PC-3 (cell line): ENCODE measurements at regions of chr5 and their contacts with region 1.

Region 1: GRCh38 chr5:137320056-137321045 is 178.8 kb downstream of the SPOCK1 start:
- DNase-seq: peak; percentile 69
- ATAC-seq: 0 out of 2 replicates have a peak, but pooled peaks have one; percentile 24
- H3K4me3 ChIP-seq: no peak overlapping the region
- H3K27ac ChIP-seq: no peak overlapping the region
- H3K4me1 ChIP-seq: peaks cover 8% of the 10 kb centered on the region
- H3K27me3 ChIP-seq: no peaks in the 10 kb centered on the region
- CTCF ChIP-seq: peak; percentile 71

Region 2: DNA sequence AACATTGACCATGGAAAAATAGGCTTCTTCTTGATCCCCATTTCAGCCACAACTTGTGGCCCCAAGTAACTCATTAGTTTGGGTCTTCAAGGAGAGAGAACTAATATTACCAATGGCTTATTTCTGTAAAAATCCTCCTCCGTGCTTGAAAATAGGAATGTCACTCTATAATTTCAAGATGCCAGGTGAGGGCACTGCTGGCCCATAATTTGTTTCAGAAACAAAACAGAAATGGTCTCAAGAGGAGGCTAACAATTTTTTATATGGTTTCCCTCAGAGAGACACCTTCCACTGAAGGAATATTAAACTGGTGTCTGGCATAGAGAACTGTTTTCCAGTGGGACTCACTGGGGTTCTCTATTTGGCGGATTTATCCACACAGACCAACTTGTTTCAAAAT is 518.0 kb before region 1 on chr5:
- CTCF ChIA-PET with region 1: interaction called, 10 read pairs
- POLR2A ChIA-PET with region 1: no interaction called
- intact Hi-C with region 1: loop called (anchors 5 kb)
- DNase-seq: peak; percentile 56
- ATAC-seq: no peak
- H3K4me3 ChIP-seq: no peak overlapping the region
- H3K27ac ChIP-seq: no peak overlapping the region
- H3K4me1 ChIP-seq: peaks cover 8% of the 10 kb centered on the region; the same call in 1 of the 2 replicates
- H3K27me3 ChIP-seq: no peaks in the 10 kb centered on the region
- CTCF ChIP-seq: peak; percentile 66

Region 3: DNA sequence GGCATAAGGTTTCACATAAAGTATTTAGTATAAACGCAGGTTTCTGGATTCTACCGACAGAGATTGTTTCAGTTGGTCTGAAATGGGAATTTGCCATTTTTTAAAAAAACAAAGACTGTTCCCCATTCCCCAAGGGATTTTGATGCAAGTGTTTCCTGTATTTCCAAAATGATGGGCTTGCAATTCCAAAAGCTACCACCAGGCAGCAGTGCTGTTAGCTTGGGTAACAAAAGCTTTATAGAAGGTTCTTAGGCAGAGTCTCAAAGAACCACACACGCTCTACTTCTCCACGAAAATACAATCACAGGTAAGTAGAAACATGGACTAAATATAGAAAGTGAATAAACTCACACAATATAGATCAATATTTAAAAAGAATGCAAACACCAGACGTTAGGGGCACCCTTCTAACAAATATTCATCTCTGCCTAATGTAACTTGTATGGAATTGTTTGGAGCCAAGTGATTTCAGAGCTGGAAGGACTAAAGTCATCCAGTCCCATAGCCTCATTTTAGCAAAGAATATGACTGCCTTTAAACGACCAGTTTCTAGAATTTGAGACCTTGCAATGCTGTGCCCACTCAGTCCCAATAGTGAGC is 24.5 kb after region 1 on chr5:
- CTCF ChIA-PET with region 1: interaction called, 11 read pairs
- POLR2A ChIA-PET with region 1: no interaction called
- intact Hi-C with region 1: no loop called
- DNase-seq: peak; percentile 76
- ATAC-seq: no peak
- H3K4me3 ChIP-seq: no peak overlapping the region
- H3K27ac ChIP-seq: no peak overlapping the region
- H3K4me1 ChIP-seq: peaks cover 8% of the 10 kb centered on the region
- H3K27me3 ChIP-seq: no peaks in the 10 kb centered on the region
- CTCF ChIP-seq: peak; percentile 85

Region 4: GRCh38 chr5:137605411-137605810 is 285.1 kb after region 1 on chr5:
- CTCF ChIA-PET with region 1: interaction called, 8 read pairs
- POLR2A ChIA-PET with region 1: no interaction called
- intact Hi-C with region 1: loop called (anchors 5 kb)
- DNase-seq: peak; percentile 37
- ATAC-seq: peak; percentile 77
- H3K4me3 ChIP-seq: no peak overlapping the region
- H3K27ac ChIP-seq: no peak overlapping the region
- H3K4me1 ChIP-seq: 0 out of 2 replicates have a peak, but pooled peaks cover 5% of the 10 kb centered on the region
- H3K27me3 ChIP-seq: peaks cover 4% of the 10 kb centered on the region; the same call in 1 of the 2 replicates
- CTCF ChIP-seq: peak; percentile 44; the same call in 1 of the 2 replicates